ENCODE measurements at regions of chr17 and their contacts with region 1.

Region 1: DNA sequence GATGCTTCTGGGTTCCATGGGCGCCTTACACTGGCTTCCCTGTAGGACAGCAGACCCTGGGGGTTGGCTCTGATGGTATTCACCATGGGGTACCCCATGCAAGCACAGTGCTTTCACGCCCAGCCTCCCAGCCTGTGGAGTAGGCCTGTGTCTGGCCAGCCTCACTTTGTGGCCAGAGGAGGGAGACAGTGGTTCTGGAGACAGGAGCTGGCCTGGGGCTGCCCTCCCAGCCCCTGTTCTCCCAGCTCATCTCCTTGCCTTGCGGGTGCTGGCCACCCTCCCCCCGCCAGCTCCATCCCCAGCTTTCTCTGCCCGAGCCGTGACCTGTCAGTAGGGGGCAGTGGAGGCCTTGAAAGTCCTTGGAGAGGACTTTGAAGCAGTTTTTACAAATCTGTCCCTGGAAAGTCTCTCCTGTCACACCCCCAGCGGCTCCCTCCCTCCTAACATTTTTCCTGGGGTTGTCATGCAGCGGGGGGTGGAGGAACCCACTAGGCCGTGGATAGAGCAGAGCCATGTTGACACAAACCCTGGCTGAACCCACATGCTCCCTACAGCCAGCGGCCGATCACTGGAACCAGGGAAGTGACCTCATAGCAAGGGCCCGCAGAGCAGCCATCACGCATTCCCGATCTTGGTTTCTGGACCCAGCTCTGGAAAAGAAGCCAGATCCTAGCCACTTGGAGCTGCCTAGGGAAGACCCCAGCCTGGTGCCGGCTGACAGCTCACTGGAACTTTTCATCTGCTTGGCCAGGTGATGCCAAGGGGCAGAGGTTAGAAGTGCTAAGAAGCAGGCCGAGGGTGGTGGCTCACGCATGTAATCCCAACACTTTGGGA is 289.4 kb downstream of the SEC14L1 start:
- DNase-seq: peak; percentile 90 to 95 (median 94)
- H3K4me3 ChIP-seq: no peak overlapping the region
- H3K27ac ChIP-seq: peak overlapping the region; percentile 55 to 65
- H3K4me1 ChIP-seq: peaks cover 56% of the 10 kb centered on the region
- H3K27me3 ChIP-seq: no peaks in the 10 kb centered on the region
- CTCF ChIP-seq: peak; percentile 55 to 93 (median 90)
- EP300 ChIP-seq: peak; percentile 55
- POLR2A ChIP-seq: no peak

Region 2: GRCh38 chr17:77096570-77097214 is 333.4 kb before region 1 on chr17:
- intact Hi-C with region 1: no loop called
- DNase-seq: peak in 1 of 5 donors; percentile 48
- H3K4me3 ChIP-seq: no peak overlapping the region
- H3K27ac ChIP-seq: peak overlapping the region; percentile 4 to 59
- H3K4me1 ChIP-seq: peaks cover 12% of the 10 kb centered on the region
- H3K27me3 ChIP-seq: no peaks in the 10 kb centered on the region
- CTCF ChIP-seq: peak; percentile 63 to 85 (median 75)
- EP300 ChIP-seq: no peak
- POLR2A ChIP-seq: no peak

Region 3: DNA sequence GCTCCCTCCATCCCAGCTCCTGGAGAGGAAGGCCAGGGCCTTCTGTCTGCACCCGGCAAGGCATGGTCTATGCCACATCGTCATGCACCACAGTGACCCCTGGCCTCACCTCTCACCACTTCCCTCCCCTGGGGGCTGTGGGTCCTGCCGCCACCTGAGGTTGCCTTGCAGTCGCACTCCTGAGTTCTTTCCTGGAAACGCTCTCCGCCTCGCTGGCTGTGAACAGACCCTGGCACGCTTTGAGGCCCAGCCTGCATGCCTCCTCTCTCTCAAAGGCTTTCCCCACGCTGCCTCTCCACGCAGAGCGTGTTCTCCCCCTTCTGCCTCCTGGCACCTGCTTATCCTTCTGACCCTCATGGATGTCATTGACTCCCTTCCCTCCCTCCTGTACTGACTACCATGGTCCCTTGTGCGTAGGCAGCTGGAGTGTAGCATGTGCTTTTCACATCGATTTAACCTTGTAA is 244.0 kb before region 1 on chr17:
- intact Hi-C with region 1: no loop called
- DNase-seq: peak in 2 of 5 donors; percentile 33 to 45
- H3K4me3 ChIP-seq: no peak overlapping the region
- H3K27ac ChIP-seq: no peak overlapping the region
- H3K4me1 ChIP-seq: peaks cover 13% of the 10 kb centered on the region
- H3K27me3 ChIP-seq: no peaks in the 10 kb centered on the region
- CTCF ChIP-seq: no peak
- EP300 ChIP-seq: no peak
- POLR2A ChIP-seq: no peak

Region 4: GRCh38 chr17:77325577-77326075 is 104.5 kb before region 1 on chr17:
- intact Hi-C with region 1: loop called in 3 of 4 experiments (anchors 5 kb)
- DNase-seq: peak in 2 of 5 donors; percentile 33 to 36
- H3K4me3 ChIP-seq: no peak overlapping the region
- H3K27ac ChIP-seq: peak overlapping the region; percentile 44 to 57
- H3K4me1 ChIP-seq: peaks cover 28% of the 10 kb centered on the region
- H3K27me3 ChIP-seq: no peaks in the 10 kb centered on the region
- CTCF ChIP-seq: no peak
- EP300 ChIP-seq: no peak
- POLR2A ChIP-seq: no peak

Region 5: DNA sequence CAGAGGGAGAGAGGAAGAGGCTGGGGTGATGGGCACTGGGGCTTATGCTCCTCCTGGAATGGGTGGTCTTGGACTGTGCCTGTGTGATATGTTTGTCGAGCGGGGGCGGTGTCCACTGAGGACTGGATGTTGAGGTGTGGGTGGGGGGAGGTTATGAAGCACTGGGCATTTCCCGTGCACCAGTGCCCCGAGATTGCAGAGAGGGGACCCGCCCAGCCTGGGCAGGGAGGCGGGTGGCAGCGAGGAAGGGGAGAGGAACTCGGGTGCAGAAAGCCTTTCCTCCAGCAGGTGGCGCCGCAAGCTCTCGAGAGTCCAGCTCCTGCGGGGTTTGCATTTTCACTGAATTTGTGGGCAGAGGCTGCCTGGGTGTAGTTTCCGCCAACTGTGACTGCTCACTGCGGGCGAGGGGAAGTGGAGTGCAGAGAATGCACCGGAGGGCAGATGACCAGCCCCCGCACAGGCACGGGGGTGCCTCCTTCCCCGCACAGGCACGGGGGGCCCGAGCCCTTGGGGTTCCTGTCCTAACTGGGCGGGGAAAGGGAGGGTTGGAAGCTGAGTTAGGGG is 98.8 kb before region 1 on chr17:
- intact Hi-C with region 1: loop called in 3 of 4 experiments (anchors 5 kb)
- DNase-seq: peak; percentile 89 to 96 (median 94)
- H3K4me3 ChIP-seq: peak overlapping the region; percentile 14
- H3K27ac ChIP-seq: no peak overlapping the region
- H3K4me1 ChIP-seq: no peaks in the 10 kb centered on the region
- H3K27me3 ChIP-seq: no peaks in the 10 kb centered on the region
- CTCF ChIP-seq: peak; percentile 89 to 95 (median 94)
- EP300 ChIP-seq: no peak
- POLR2A ChIP-seq: no peak

Region 6: DNA sequence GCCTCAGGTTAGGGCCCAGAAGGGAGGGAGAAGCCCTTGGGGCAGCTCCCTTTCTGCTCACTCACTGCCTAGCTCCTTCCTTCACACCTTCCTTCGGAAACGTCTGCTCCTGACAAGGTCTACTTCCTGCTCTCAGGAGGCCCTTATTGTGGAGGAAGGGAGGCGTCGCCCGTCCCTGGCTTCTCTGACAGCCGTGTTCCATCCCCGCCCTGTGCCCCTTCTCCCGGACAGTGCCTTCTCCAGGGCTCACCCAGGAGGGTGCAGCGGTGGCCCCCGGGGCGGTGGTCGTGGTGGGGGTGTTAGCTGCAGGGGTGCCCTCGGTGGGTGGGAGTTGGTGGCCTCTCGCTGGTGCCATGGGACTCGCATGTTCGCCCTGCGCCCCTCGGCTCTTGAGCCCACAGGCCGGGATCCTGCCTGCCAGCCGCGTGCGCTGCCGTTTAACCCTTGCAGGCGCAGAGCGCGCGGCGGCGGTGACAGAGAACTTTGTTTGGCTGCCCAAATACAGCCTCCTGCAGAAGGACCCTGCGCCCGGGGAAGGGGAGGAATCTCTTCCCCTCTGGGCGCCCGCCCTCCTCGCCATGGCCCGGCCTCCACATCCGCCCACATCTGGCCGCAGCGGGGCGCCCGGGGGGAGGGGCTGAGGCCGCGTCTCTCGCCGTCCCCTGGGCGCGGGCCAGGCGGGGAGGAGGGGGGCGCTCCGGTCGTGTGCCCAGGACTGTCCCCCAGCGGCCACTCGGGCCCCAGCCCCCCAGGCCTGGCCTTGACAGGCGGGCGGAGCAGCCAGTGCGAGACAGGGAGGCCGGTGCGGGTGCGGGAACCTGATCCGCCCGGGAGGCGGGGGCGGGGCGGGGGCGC is 57.5 kb before region 1 on chr17:
- intact Hi-C with region 1: loop called in 1 of 4 experiments (anchors 10 kb)
- DNase-seq: peak; percentile 87 to 93 (median 90)
- H3K4me3 ChIP-seq: peak overlapping the region; percentile 73
- H3K27ac ChIP-seq: peak overlapping the region; percentile 77 to 89
- H3K4me1 ChIP-seq: peaks cover 41% of the 10 kb centered on the region
- H3K27me3 ChIP-seq: no peaks in the 10 kb centered on the region
- CTCF ChIP-seq: peak in 1 of 3 donors; percentile 12
- EP300 ChIP-seq: no peak
- POLR2A ChIP-seq: no peak

Region 7: DNA sequence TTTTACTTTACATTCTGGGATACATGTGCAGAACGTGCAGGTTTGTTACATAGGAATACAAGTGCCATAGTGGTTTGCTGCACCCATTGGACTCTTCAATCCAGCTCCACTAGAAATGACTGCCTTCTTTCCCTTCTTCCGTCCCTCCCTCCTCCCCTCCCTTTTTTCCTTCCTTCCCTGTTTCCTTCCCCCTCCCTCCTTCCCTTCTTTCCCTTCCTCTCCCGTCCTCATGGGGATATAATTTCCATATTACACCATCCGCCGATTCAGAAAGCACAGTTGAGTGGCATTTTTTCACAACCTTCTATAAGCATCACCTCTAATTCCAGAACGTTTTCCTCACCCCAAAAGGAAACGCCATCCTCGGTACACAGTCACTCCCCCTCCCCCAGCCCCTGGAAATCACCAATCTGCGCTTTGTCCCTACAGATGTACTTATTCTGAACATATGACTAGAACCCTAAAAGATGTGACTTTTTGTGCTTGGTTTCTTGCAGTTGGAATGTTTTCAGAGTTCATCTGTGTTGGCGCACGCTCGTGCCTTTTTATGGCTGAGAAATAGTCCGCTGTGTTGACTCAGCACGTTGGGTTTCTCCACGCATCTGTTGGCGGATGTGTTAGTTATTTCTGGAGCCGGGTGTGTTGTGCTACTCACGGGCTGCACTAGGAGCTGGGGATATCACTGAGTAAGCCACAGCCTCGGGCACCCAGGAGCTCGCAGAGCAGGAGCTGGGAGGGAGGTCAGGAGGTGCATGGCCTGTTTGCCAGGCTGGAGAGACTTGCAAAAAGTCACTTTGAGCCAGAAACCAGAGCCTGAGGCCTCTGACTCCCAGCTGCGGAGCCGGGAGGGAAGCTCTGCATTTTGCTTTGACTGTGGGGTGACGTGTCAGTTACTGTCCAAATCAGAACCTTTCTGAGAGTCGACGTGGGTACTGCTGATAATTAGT is 47.1 kb after region 1 on chr17:
- intact Hi-C with region 1: loop called in 2 of 4 experiments (anchors 5 kb)
- DNase-seq: peak; percentile 68 to 85 (median 72)
- H3K4me3 ChIP-seq: no peak overlapping the region
- H3K27ac ChIP-seq: no peak overlapping the region
- H3K4me1 ChIP-seq: peaks cover 70% of the 10 kb centered on the region
- H3K27me3 ChIP-seq: no peaks in the 10 kb centered on the region
- CTCF ChIP-seq: no peak
- EP300 ChIP-seq: peak; percentile 14
- POLR2A ChIP-seq: no peak

Region 8: DNA sequence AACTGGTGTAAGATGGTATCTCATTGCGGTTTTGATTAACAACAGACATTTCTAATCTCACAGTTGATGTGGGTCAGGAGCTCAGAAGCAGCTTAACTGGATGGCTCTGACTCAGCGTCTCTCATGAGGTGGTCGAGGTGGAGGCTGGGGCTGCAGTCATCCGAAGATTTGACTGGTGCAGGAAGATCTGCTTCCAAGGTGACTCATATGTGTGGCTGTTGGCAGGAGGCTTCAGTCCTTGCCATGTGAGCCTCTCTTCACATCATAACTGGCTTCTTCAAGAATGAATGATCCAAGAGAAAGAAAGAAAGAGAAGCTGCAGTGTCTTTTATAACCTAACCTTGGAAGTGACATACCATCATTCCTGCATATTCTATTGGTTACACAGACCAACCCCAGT is 86.8 kb after region 1 on chr17:
- intact Hi-C with region 1: no loop called
- DNase-seq: no peak
- H3K4me3 ChIP-seq: no peak overlapping the region
- H3K27ac ChIP-seq: no peak overlapping the region
- H3K4me1 ChIP-seq: no peaks in the 10 kb centered on the region
- H3K27me3 ChIP-seq: no peaks in the 10 kb centered on the region
- CTCF ChIP-seq: no peak
- EP300 ChIP-seq: no peak
- POLR2A ChIP-seq: no peak

Region 9: DNA sequence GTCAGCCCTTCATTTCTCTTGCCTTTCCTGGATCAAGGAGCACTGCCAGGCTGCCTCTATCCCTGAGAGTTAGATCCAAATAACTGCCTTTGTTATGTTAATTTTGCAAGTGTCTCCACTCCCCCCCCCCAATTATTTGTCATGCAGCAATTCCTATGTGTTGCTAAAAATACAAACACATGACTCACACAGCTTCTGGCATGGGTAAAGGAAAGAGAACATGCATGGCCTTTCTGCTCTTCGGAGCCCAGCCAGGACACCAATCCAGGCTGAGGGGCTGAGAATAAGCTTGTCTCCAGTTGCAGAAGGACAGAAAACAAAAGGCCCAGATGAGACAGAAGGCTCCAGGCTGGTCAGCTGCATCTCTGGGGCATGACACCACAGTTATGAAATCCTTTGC is 380.4 kb after region 1 on chr17:
- intact Hi-C with region 1: no loop called
- DNase-seq: peak in 1 of 5 donors; percentile 41
- H3K4me3 ChIP-seq: no peak overlapping the region
- H3K27ac ChIP-seq: no peak overlapping the region
- H3K4me1 ChIP-seq: peaks cover 2% of the 10 kb centered on the region
- H3K27me3 ChIP-seq: no peaks in the 10 kb centered on the region
- CTCF ChIP-seq: no peak
- EP300 ChIP-seq: no peak
- POLR2A ChIP-seq: no peak

Measured in ovary (tissue), 10 donors.